Motor neuron (in vitro differentiated cells): ENCODE measurements at regions of chr14 and their contacts with region 1.

Region 1: GRCh38 chr14:53953002-53953827 is 3.4 kb downstream of the BMP4 start:
- ATAC-seq: peak; percentile 61 to 90 (median 88)
- H3K4me3 ChIP-seq: peak overlapping the region; percentile 37 to 53 (median 44)
- H3K27ac ChIP-seq: no peak overlapping the region
- H3K4me1 ChIP-seq: peaks cover 0 to 9% of the 10 kb centered on the region in 2 donors

Region 2: DNA sequence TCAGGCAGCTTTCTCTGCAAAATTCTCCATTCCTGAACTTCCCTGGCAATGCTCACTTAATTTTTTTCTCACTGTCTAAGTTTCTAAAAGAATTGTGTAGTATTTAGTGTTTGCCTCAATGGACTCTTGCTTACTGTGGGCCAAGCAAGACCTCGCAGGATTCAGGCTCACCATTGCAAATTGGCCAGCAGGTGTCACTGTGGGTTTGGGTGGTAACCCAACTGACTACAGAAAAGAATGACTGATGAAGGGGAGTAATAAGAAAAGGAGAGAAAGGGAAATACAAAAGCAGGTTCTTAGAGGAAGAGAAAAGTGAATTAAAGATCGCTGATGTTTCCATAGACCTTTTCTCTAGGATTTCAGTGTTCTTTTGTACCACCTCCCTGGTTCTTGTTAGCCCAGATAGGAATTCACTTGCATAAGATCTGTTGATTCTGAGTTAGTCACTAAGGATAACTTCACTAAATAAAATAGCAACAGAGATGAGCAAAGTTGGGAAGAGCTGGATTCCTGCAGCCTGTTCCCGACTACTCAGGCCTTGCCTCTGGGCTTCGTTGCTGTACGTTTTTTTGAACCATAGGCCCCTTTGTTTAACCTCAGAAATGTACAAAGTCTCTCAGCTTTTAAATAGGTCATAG is 413.6 kb before region 1 on chr14:
- in situ Hi-C with region 1: loop called in 1 of 9 experiments (anchors 25 kb)
- ATAC-seq: peak; percentile 58 to 92 (median 78)
- H3K4me3 ChIP-seq: no peak overlapping the region
- H3K27ac ChIP-seq: no peak overlapping the region
- H3K4me1 ChIP-seq: peaks cover 6% of the 10 kb centered on the region in 2 donors